ENCODE measurements at regions of chr2 and their contacts with region 1.

Region 1: DNA sequence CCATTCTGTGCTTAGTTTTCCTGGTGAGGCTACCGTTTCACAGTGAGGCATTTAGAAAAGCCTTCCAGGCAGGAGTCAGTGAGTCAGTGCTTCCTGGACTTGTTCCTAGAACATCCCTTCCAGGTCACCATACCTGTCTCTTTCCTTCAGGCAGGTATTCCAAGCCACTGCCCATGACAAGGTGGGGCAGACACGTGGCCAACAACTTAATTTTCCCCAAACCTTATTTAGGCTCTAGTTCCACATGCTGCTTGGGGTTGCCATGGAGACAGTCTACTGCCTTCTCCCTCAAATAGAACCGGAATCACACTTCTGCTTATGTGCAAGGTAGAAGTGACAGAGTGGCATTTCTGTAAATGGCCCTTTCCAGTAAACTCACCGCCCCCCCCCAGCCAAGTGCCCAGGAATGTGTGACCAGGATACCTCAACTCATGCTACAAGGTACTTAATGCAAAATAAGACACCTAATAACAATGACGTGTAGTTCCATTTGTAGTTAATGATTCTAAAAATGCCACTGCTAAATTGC is 258.3 kb downstream of the PRKCE start:
- DNase-seq: no peak
- ATAC-seq: no peak
- H3K4me3 ChIP-seq: no peak overlapping the region
- H3K4me3 Mint-ChIP-seq: no peak overlapping the region
- H3K27ac ChIP-seq: no peak overlapping the region
- H3K27ac Mint-ChIP-seq: no peak overlapping the region
- H3K4me1 ChIP-seq: peaks cover 8% of the 10 kb centered on the region
- H3K4me1 Mint-ChIP-seq: peaks cover 16 to 21% of the 10 kb centered on the region in 2 donors
- H3K27me3 ChIP-seq: no peaks in the 10 kb centered on the region
- H3K27me3 Mint-ChIP-seq: no peaks in the 10 kb centered on the region
- CTCF ChIP-seq: no peak

Region 2: DNA sequence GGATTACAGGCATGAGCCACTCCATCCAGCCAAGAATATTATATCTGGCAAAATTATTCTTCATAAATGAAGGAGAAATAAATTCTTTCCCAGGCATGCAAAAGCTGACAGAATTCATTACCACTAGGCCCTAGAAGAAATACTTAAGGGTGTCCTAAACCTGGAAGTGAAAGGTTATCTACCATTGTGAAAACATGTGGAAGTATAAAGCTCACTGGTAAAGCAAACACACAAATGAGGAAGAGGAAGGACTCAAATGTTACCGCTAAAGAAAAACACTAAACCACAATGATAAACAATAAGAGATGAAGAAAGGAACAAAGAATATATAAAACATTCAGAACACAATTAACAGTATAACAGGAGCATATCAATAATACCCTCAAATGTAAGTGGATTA is 1376.2 kb before region 1 on chr2:
- intact Hi-C with region 1: loop called (anchors 5 kb)
- DNase-seq: no peak
- ATAC-seq: no peak
- H3K4me3 ChIP-seq: no peak overlapping the region
- H3K4me3 Mint-ChIP-seq: no peak overlapping the region
- H3K27ac ChIP-seq: no peak overlapping the region
- H3K27ac Mint-ChIP-seq: no peak overlapping the region
- H3K4me1 ChIP-seq: no peaks in the 10 kb centered on the region
- H3K4me1 Mint-ChIP-seq: peaks cover 0 to 7% of the 10 kb centered on the region in 2 donors
- H3K27me3 ChIP-seq: no peaks in the 10 kb centered on the region
- H3K27me3 Mint-ChIP-seq: no peaks in the 10 kb centered on the region
- CTCF ChIP-seq: no peak

Region 3: GRCh38 chr2:45889053-45889452 is 20.7 kb before region 1 on chr2:
- intact Hi-C with region 1: no loop called
- DNase-seq: peak in 1 of 2 donors; percentile 70
- ATAC-seq: peak; percentile 52 to 79 (median 68)
- H3K4me3 ChIP-seq: no peak overlapping the region
- H3K4me3 Mint-ChIP-seq: no peak overlapping the region
- H3K27ac ChIP-seq: no peak overlapping the region
- H3K27ac Mint-ChIP-seq: no peak overlapping the region
- H3K4me1 ChIP-seq: peaks cover 53% of the 10 kb centered on the region
- H3K4me1 Mint-ChIP-seq: peaks cover 23 to 39% of the 10 kb centered on the region in 2 donors
- H3K27me3 ChIP-seq: no peaks in the 10 kb centered on the region
- H3K27me3 Mint-ChIP-seq: peaks cover 10 to 17% of the 10 kb centered on the region in 2 donors
- CTCF ChIP-seq: no peak

Region 4: GRCh38 chr2:45992021-45992740 is 82.5 kb after region 1 on chr2:
- intact Hi-C with region 1: no loop called
- DNase-seq: no peak
- ATAC-seq: no peak
- H3K4me3 ChIP-seq: no peak overlapping the region
- H3K4me3 Mint-ChIP-seq: no peak overlapping the region
- H3K27ac ChIP-seq: no peak overlapping the region
- H3K27ac Mint-ChIP-seq: no peak overlapping the region
- H3K4me1 ChIP-seq: no peaks in the 10 kb centered on the region
- H3K4me1 Mint-ChIP-seq: no peaks in the 10 kb centered on the region
- H3K27me3 ChIP-seq: no peaks in the 10 kb centered on the region
- H3K27me3 Mint-ChIP-seq: no peaks in the 10 kb centered on the region
- CTCF ChIP-seq: no peak